ENCODE measurements at regions of chr12 and their contacts with region 1.

Region 1: GRCh38 chr12:19234171-19234704 is 104.7 kb downstream of the PLEKHA5 start:
- DNase-seq: peak in 2 of 3 donors; percentile 7 to 19
- H3K4me3 ChIP-seq: peak overlapping the region in 2 of 3 experiments; percentile 9 to 13
- H3K4me3 Mint-ChIP-seq: peak overlapping the region in 1 of 2 donors; percentile 6
- H3K27ac ChIP-seq: peak overlapping the region in 1 of 2 donors; percentile 64
- H3K27ac Mint-ChIP-seq: peak overlapping the region in 5 of 7 donors; percentile 53 to 75 (median 68)
- H3K4me1 ChIP-seq: peaks cover 25 to 37% of the 10 kb centered on the region in 2 donors
- H3K4me1 Mint-ChIP-seq: peaks cover 45% of the 10 kb centered on the region
- H3K27me3 ChIP-seq: no peaks in the 10 kb centered on the region
- H3K27me3 Mint-ChIP-seq: no peaks in the 10 kb centered on the region
- CTCF ChIP-seq: no peak

Region 2: GRCh38 chr12:19198272-19198671 is 36.0 kb before region 1 on chr12:
- intact Hi-C with region 1: loop called in 1 of 2 experiments (anchors 5 kb)
- DNase-seq: no peak
- H3K4me3 ChIP-seq: no peak overlapping the region
- H3K4me3 Mint-ChIP-seq: no peak overlapping the region
- H3K27ac ChIP-seq: no peak overlapping the region
- H3K27ac Mint-ChIP-seq: no peak overlapping the region
- H3K4me1 ChIP-seq: no peaks in the 10 kb centered on the region
- H3K4me1 Mint-ChIP-seq: peaks cover 3% of the 10 kb centered on the region
- H3K27me3 ChIP-seq: no peaks in the 10 kb centered on the region
- H3K27me3 Mint-ChIP-seq: no peaks in the 10 kb centered on the region
- CTCF ChIP-seq: no peak

Region 3: DNA sequence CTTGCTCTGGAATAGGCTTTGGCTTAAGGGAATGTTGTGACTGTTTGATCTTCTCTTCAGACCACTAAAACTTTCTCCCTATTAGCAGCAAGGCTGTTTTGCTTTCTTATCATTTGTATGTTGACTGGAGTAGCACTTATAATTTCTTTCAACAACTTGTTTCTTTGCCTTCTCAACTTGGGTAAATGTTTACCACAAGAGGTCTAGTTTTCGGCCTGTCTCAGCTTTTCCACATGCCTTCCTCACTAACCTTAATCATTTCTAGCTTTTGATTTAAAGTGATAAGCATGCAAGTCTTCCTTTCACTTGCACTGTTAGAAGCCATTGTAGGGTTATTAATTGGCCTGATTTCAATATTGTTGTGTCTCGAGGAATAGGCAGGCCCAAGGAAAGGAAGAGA is 78.4 kb after region 1 on chr12:
- intact Hi-C with region 1: no loop called
- DNase-seq: no peak
- H3K4me3 ChIP-seq: no peak overlapping the region
- H3K4me3 Mint-ChIP-seq: no peak overlapping the region
- H3K27ac ChIP-seq: no peak overlapping the region
- H3K27ac Mint-ChIP-seq: no peak overlapping the region
- H3K4me1 ChIP-seq: no peaks in the 10 kb centered on the region
- H3K4me1 Mint-ChIP-seq: no peaks in the 10 kb centered on the region
- H3K27me3 ChIP-seq: no peaks in the 10 kb centered on the region
- H3K27me3 Mint-ChIP-seq: no peaks in the 10 kb centered on the region
- CTCF ChIP-seq: no peak

Region 4: GRCh38 chr12:19597167-19598026 is 363.2 kb after region 1 on chr12:
- intact Hi-C with region 1: no loop called
- DNase-seq: no peak
- H3K4me3 ChIP-seq: no peak overlapping the region
- H3K4me3 Mint-ChIP-seq: no peak overlapping the region
- H3K27ac ChIP-seq: no peak overlapping the region
- H3K27ac Mint-ChIP-seq: no peak overlapping the region
- H3K4me1 ChIP-seq: no peaks in the 10 kb centered on the region
- H3K4me1 Mint-ChIP-seq: no peaks in the 10 kb centered on the region
- H3K27me3 ChIP-seq: no peaks in the 10 kb centered on the region
- H3K27me3 Mint-ChIP-seq: peaks cover 0 to 2% (median 0%) of the 10 kb centered on the region in 3 donors
- CTCF ChIP-seq: no peak

Region 5: DNA sequence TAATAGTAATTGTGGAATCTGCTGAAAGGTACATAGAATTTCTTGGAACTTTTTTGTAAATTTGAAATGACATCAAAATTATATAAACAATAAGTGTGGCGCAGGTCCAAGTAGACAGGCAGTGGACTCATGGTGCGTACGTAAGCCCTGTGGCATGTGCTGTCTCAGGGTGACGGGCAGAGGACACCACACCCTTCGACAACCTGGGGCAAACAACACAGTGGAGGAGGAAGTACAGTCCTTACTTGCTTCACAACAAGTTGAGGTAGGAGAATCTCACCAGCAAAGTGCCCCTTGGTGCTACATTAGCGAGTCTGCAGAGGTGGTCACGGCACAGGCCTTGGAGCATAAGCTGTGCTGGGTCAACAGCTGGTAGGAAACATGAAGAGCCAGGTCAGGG is 386.0 kb after region 1 on chr12:
- intact Hi-C with region 1: no loop called
- DNase-seq: no peak
- H3K4me3 ChIP-seq: no peak overlapping the region
- H3K4me3 Mint-ChIP-seq: no peak overlapping the region
- H3K27ac ChIP-seq: no peak overlapping the region
- H3K27ac Mint-ChIP-seq: no peak overlapping the region
- H3K4me1 ChIP-seq: peaks cover 0 to 7% of the 10 kb centered on the region in 2 donors
- H3K4me1 Mint-ChIP-seq: peaks cover 12% of the 10 kb centered on the region
- H3K27me3 ChIP-seq: no peaks in the 10 kb centered on the region
- H3K27me3 Mint-ChIP-seq: peaks cover 0 to 3% (median 0%) of the 10 kb centered on the region in 3 donors
- CTCF ChIP-seq: no peak